Activated CD4-positive, alpha-beta T cell treated with anti-CD3 and anti-CD28 coated beads for 36 hours (primary cell): ENCODE measurements at regions of chr15 and their contacts with region 1.

Region 1: GRCh38 chr15:92808978-92809879 is 90.9 kb upstream of the CHD2 start:
- DNase-seq: peak; percentile 99
- ATAC-seq: peak; percentile 82
- H3K4me3 Mint-ChIP-seq: peak overlapping the region; percentile 88
- H3K27ac Mint-ChIP-seq: peak overlapping the region; percentile 99
- H3K4me1 Mint-ChIP-seq: peaks cover 43% of the 10 kb centered on the region
- H3K27me3 Mint-ChIP-seq: no peaks in the 10 kb centered on the region

Region 2: GRCh38 chr15:92599394-92599970 is 209.7 kb before region 1 on chr15:
- CTCF ChIA-PET with region 1: no interaction called
- POLR2A ChIA-PET with region 1: no interaction called
- intact Hi-C with region 1: no loop called
- DNase-seq: peak; percentile 17
- ATAC-seq: peak; percentile 78
- H3K4me3 Mint-ChIP-seq: no peak overlapping the region
- H3K27ac Mint-ChIP-seq: no peak overlapping the region
- H3K4me1 Mint-ChIP-seq: peaks cover 8% of the 10 kb centered on the region
- H3K27me3 Mint-ChIP-seq: peaks cover 9% of the 10 kb centered on the region

Region 3: GRCh38 chr15:92751524-92751923 is 57.7 kb before region 1 on chr15:
- CTCF ChIA-PET with region 1: no interaction called
- POLR2A ChIA-PET with region 1: no interaction called
- intact Hi-C with region 1: no loop called
- DNase-seq: no peak
- ATAC-seq: no peak
- H3K4me3 Mint-ChIP-seq: no peak overlapping the region
- H3K27ac Mint-ChIP-seq: no peak overlapping the region
- H3K4me1 Mint-ChIP-seq: no peaks in the 10 kb centered on the region
- H3K27me3 Mint-ChIP-seq: no peaks in the 10 kb centered on the region

Region 4: GRCh38 chr15:92820236-92821021 is 11.2 kb after region 1 on chr15:
- CTCF ChIA-PET with region 1: interaction called, 31 read pairs
- POLR2A ChIA-PET with region 1: interaction called, 19 read pairs
- intact Hi-C with region 1: loop called (anchors 1 kb)
- DNase-seq: peak; percentile 92
- ATAC-seq: peak; percentile 63
- H3K4me3 Mint-ChIP-seq: peak overlapping the region; percentile 82
- H3K27ac Mint-ChIP-seq: peak overlapping the region; percentile 77
- H3K4me1 Mint-ChIP-seq: peaks cover 64% of the 10 kb centered on the region
- H3K27me3 Mint-ChIP-seq: no peaks in the 10 kb centered on the region

Region 5: GRCh38 chr15:92831655-92832328 is 22.6 kb after region 1 on chr15:
- CTCF ChIA-PET with region 1: interaction called, 26 read pairs
- POLR2A ChIA-PET with region 1: interaction called, 23 read pairs
- intact Hi-C with region 1: loop called (anchors 1 kb)
- DNase-seq: peak; percentile 96
- ATAC-seq: peak; percentile 95
- H3K4me3 Mint-ChIP-seq: peak overlapping the region; percentile 65
- H3K27ac Mint-ChIP-seq: peak overlapping the region; percentile 96
- H3K4me1 Mint-ChIP-seq: peaks cover 58% of the 10 kb centered on the region
- H3K27me3 Mint-ChIP-seq: no peaks in the 10 kb centered on the region

Region 6: DNA sequence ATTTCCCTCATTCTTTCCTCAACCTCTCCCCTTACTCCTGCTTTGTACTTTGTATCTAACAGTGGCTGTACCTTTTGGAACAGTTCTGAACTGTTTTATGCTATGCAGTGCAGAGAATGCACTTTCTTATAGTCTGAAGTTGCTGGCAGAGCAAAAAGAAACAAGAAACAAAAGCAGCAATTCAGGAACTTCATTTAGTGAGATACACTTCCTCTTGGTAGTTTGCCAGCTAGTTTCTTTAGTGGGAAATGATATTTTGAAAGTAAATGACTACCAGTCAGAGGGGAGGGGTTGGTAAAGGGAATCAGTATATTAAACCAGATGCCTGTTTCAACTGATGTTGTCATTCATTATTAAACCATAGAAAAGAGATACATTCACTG is 35.9 kb after region 1 on chr15:
- CTCF ChIA-PET with region 1: interaction called, 5 read pairs
- POLR2A ChIA-PET with region 1: interaction called, 5 read pairs
- intact Hi-C with region 1: loop called (anchors 1 to 5 kb)
- DNase-seq: no peak
- ATAC-seq: peak; percentile 43
- H3K4me3 Mint-ChIP-seq: peak overlapping the region; percentile 57
- H3K27ac Mint-ChIP-seq: peak overlapping the region; percentile 99
- H3K4me1 Mint-ChIP-seq: peaks cover 79% of the 10 kb centered on the region
- H3K27me3 Mint-ChIP-seq: no peaks in the 10 kb centered on the region

Region 7: GRCh38 chr15:92954578-92954977 is 145.3 kb after region 1 on chr15:
- CTCF ChIA-PET with region 1: no interaction called
- POLR2A ChIA-PET with region 1: no interaction called
- intact Hi-C with region 1: loop called in 1 of 2 experiments (anchors 1 kb)
- DNase-seq: peak; percentile 28
- ATAC-seq: no peak
- H3K4me3 Mint-ChIP-seq: no peak overlapping the region
- H3K27ac Mint-ChIP-seq: no peak overlapping the region
- H3K4me1 Mint-ChIP-seq: peaks cover 33% of the 10 kb centered on the region
- H3K27me3 Mint-ChIP-seq: no peaks in the 10 kb centered on the region

Region 8: GRCh38 chr15:93018580-93018979 is 209.4 kb after region 1 on chr15:
- CTCF ChIA-PET with region 1: no interaction called
- POLR2A ChIA-PET with region 1: no interaction called
- intact Hi-C with region 1: loop called in 1 of 2 experiments (anchors 2 kb)
- DNase-seq: no peak
- ATAC-seq: no peak
- H3K4me3 Mint-ChIP-seq: no peak overlapping the region
- H3K27ac Mint-ChIP-seq: peak overlapping the region; percentile 80
- H3K4me1 Mint-ChIP-seq: peaks cover 71% of the 10 kb centered on the region
- H3K27me3 Mint-ChIP-seq: no peaks in the 10 kb centered on the region

Region 9: DNA sequence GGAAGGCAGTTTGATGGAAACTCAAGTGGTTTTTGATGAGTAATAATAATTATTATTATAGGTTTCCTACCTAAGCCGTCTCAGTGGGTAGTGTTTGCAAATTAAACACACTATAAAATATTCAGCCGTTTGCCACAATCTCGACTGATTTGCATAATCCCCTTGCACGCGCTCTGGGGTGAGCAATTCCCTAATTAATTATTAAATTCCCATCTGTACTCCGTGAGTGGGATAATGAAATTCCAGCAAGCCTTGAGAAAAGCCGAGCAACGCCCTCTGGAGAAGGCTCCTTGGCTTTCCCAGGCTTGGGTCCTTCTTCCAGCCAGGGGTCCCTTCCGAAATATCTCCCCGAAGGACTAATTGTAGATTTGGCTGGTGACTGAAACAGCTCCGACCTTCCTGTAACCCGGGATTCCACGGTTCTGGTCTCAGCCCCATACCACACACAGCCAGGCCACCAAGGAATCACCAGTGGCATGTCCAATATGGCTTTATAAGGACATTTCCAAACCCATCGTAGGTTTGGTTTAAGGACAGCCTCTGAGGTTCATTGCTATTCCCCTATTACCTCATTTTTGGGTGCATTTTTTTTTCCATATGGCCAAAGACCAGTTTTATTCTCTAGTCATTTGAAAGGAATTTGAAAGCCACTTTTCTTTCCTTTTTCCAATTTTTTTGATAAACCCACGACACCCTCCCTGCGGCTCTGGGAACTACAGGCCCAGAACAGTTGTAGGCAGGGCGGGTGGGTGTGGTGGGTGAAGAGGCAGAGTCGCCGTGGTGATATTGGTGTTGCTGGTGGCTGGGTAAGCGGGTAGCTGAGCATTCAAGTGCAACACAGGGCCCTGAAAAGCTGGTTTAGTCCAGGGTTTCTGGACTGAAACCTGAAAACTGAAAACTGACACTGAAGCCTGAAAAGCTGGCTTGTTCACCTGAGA is 313.0 kb after region 1 on chr15:
- CTCF ChIA-PET with region 1: no interaction called
- POLR2A ChIA-PET with region 1: no interaction called
- intact Hi-C with region 1: no loop called
- DNase-seq: no peak
- ATAC-seq: no peak
- H3K4me3 Mint-ChIP-seq: no peak overlapping the region
- H3K27ac Mint-ChIP-seq: no peak overlapping the region
- H3K4me1 Mint-ChIP-seq: peaks cover 6% of the 10 kb centered on the region
- H3K27me3 Mint-ChIP-seq: peaks cover 1% of the 10 kb centered on the region

Region 10: GRCh38 chr15:93603550-93603949 is 794.3 kb after region 1 on chr15:
- CTCF ChIA-PET with region 1: no interaction called
- POLR2A ChIA-PET with region 1: no interaction called
- intact Hi-C with region 1: no loop called
- DNase-seq: no peak
- ATAC-seq: no peak
- H3K4me3 Mint-ChIP-seq: no peak overlapping the region
- H3K27ac Mint-ChIP-seq: no peak overlapping the region
- H3K4me1 Mint-ChIP-seq: no peaks in the 10 kb centered on the region
- H3K27me3 Mint-ChIP-seq: peaks cover 6% of the 10 kb centered on the region